GM12878 (cell line): ENCODE measurements at regions of chr1 and their contacts with region 1.

Region 1: GRCh38 chr1:224851210-224851847 is 78.1 kb upstream of the DNAH14 start:
- DNase-seq: peak; percentile 41
- ATAC-seq: peak; percentile 95
- H3K4me3 ChIP-seq: no peak overlapping the region
- H3K27ac ChIP-seq: no peak overlapping the region
- H3K4me1 ChIP-seq: no peaks in the 10 kb centered on the region
- H3K27me3 ChIP-seq: no peaks in the 10 kb centered on the region; a peak in 1 of 4 replicates
- CTCF ChIP-seq: peak; percentile 81 to 89 (median 87)
- EP300 ChIP-seq: no peak
- POLR2A ChIP-seq: no peak
- RAD21 ChIP-seq: peak; percentile 80

Region 2: DNA sequence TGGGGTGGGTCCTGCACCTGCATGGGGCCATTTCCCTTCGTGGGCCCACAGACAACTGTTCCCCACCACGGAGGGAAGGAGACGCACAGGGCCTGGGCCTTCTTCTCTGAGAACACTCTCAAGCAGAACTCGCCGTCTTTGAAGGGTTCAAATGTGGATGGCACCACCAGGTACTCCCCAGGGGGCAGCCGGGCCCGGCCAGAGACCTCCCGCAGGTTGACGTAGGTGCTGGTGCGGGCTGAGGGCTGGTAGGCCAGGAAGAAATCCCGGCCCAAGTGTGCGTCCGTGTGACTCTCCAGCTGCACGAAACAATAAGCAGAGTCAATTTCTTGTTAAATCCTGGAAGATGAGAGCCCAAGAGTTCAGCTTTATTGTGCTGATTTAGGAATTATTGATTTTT is 1242.3 kb before region 1 on chr1:
- CTCF ChIA-PET with region 1: no interaction called
- POLR2A ChIA-PET with region 1: no interaction called
- RAD21 ChIA-PET with region 1: no interaction called
- SMC1A ChIA-PET with region 1: no interaction called
- in situ Hi-C with region 1: no loop called
- intact Hi-C with region 1: no loop called
- DNase-seq: no peak
- ATAC-seq: no peak
- H3K4me3 ChIP-seq: no peak overlapping the region
- H3K27ac ChIP-seq: no peak overlapping the region
- H3K4me1 ChIP-seq: no peaks in the 10 kb centered on the region
- H3K27me3 ChIP-seq: peaks cover 0 to 3% of the 10 kb centered on the region in 2 experiments; a peak in 1 of 4 replicates
- CTCF ChIP-seq: no peak
- EP300 ChIP-seq: no peak
- POLR2A ChIP-seq: no peak
- RAD21 ChIP-seq: no peak

Region 3: GRCh38 chr1:224513787-224514209 is 337.5 kb before region 1 on chr1:
- CTCF ChIA-PET with region 1: interaction called, 191 read pairs
- POLR2A ChIA-PET with region 1: interaction called, 3 read pairs
- RAD21 ChIA-PET with region 1: interaction called, 35 read pairs
- SMC1A ChIA-PET with region 1: interaction called, 89 read pairs
- in situ Hi-C with region 1: loop called (anchors 5 kb)
- intact Hi-C with region 1: loop called (anchors 1 kb)
- DNase-seq: no peak
- ATAC-seq: peak; percentile 100
- H3K4me3 ChIP-seq: no peak overlapping the region
- H3K27ac ChIP-seq: no peak overlapping the region
- H3K4me1 ChIP-seq: 0 out of 2 replicates have a peak, but pooled peaks cover 5% of the 10 kb centered on the region
- H3K27me3 ChIP-seq: no peaks in the 10 kb centered on the region
- CTCF ChIP-seq: peak; percentile 86 to 98 (median 92); a peak in 5 of 6 replicates
- EP300 ChIP-seq: no peak
- POLR2A ChIP-seq: no peak
- RAD21 ChIP-seq: peak; percentile 92

Region 4: DNA sequence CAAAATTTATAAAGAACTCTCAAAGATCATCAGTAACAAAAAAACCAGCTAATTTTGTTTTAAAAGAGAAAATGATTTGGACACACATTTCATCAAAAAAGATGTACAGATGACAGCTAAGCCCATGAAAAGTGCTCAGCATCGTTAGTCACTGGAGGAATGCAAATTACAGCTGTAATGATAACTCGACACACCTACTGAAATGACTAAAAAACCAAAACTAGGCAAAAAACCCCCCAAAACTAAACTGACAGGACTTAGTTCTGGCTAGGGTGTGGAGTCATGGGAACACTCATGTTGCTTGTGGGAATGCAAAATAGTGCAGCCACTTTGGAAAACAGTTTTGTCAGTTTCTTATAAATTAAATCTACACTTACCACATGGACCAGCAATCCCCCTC is 175.7 kb before region 1 on chr1:
- CTCF ChIA-PET with region 1: interaction called, 85 read pairs
- POLR2A ChIA-PET with region 1: no interaction called
- RAD21 ChIA-PET with region 1: interaction called, 16 read pairs
- SMC1A ChIA-PET with region 1: interaction called, 37 read pairs
- in situ Hi-C with region 1: no loop called
- intact Hi-C with region 1: no loop called
- DNase-seq: no peak
- ATAC-seq: peak; percentile 73
- H3K4me3 ChIP-seq: no peak overlapping the region
- H3K27ac ChIP-seq: no peak overlapping the region
- H3K4me1 ChIP-seq: peaks cover 3% of the 10 kb centered on the region; the same call in 1 of the 2 replicates
- H3K27me3 ChIP-seq: no peaks in the 10 kb centered on the region; a peak in 1 of 4 replicates
- CTCF ChIP-seq: no peak
- EP300 ChIP-seq: no peak; a peak in 1 of 4 replicates
- POLR2A ChIP-seq: no peak
- RAD21 ChIP-seq: no peak

Region 5: DNA sequence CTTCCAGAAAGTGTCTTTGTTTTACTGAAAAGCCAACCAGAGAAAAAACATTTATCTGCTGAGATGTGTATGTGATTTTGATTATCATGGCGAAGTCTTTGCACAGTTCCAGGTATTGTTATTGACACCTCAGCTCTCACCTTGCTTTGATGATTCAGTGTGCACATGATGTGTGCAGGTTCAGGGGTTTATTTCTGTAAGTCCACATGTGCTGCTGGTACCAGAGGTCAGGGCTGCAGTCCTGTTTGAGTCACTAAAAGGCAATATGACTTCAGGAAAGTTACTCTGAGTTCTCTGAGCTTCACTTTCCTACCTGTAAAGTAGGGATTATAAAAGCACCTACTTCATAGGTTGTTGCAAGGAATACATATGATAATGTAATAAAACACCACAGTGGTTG is 138.1 kb before region 1 on chr1:
- CTCF ChIA-PET with region 1: interaction called, 13 read pairs
- POLR2A ChIA-PET with region 1: no interaction called
- RAD21 ChIA-PET with region 1: no interaction called
- SMC1A ChIA-PET with region 1: interaction called, 5 read pairs
- in situ Hi-C with region 1: loop called (anchors 5 kb)
- intact Hi-C with region 1: no loop called
- DNase-seq: no peak
- ATAC-seq: no peak
- H3K4me3 ChIP-seq: no peak overlapping the region
- H3K27ac ChIP-seq: no peak overlapping the region
- H3K4me1 ChIP-seq: no peaks in the 10 kb centered on the region
- H3K27me3 ChIP-seq: no peaks in the 10 kb centered on the region
- CTCF ChIP-seq: no peak
- EP300 ChIP-seq: no peak
- POLR2A ChIP-seq: no peak
- RAD21 ChIP-seq: no peak

Region 6: GRCh38 chr1:224774378-224774777 is 77.0 kb before region 1 on chr1:
- CTCF ChIA-PET with region 1: interaction called, 16 read pairs
- POLR2A ChIA-PET with region 1: interaction called, 3 read pairs
- RAD21 ChIA-PET with region 1: interaction called, 4 read pairs
- SMC1A ChIA-PET with region 1: interaction called, 16 read pairs
- in situ Hi-C with region 1: no loop called
- intact Hi-C with region 1: no loop called
- DNase-seq: no peak
- ATAC-seq: peak; percentile 91
- H3K4me3 ChIP-seq: no peak overlapping the region
- H3K27ac ChIP-seq: no peak overlapping the region
- H3K4me1 ChIP-seq: no peaks in the 10 kb centered on the region
- H3K27me3 ChIP-seq: no peaks in the 10 kb centered on the region
- CTCF ChIP-seq: peak in 2 of 3 experiments; percentile 42 to 59; a peak in 4 of 6 replicates
- EP300 ChIP-seq: no peak
- POLR2A ChIP-seq: no peak
- RAD21 ChIP-seq: peak; percentile 52

Region 7: DNA sequence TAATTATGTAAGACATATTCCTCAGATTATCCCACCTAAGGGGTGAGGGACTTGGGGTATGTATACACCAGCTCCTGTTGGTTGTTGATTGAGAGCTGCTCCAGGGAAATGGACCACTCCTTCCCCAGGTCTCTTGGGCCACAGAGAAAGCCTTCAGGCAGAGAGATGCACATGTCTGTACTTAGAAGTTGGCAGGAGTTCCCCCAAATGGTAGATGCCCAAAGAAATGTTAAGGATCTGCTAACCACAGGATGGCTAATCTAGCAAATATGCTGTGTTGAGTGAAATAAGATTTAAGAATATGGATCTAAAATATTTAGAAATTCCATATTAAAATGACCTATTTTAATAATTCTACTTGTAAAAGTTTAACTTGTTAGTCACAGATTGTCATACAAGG is 22.6 kb before region 1 on chr1:
- CTCF ChIA-PET with region 1: interaction called, 13 read pairs
- POLR2A ChIA-PET with region 1: no interaction called
- RAD21 ChIA-PET with region 1: interaction called, 7 read pairs
- SMC1A ChIA-PET with region 1: interaction called, 3 read pairs
- in situ Hi-C with region 1: no loop called
- intact Hi-C with region 1: no loop called
- DNase-seq: no peak
- ATAC-seq: no peak
- H3K4me3 ChIP-seq: no peak overlapping the region
- H3K27ac ChIP-seq: no peak overlapping the region
- H3K4me1 ChIP-seq: no peaks in the 10 kb centered on the region
- H3K27me3 ChIP-seq: no peaks in the 10 kb centered on the region
- CTCF ChIP-seq: no peak
- EP300 ChIP-seq: no peak
- POLR2A ChIP-seq: no peak
- RAD21 ChIP-seq: no peak

Region 8: GRCh38 chr1:224922404-224923164 is 71.3 kb after region 1 on chr1:
- CTCF ChIA-PET with region 1: interaction called, 72 read pairs
- POLR2A ChIA-PET with region 1: no interaction called
- RAD21 ChIA-PET with region 1: interaction called, 90 read pairs
- SMC1A ChIA-PET with region 1: interaction called, 41 read pairs
- in situ Hi-C with region 1: no loop called
- intact Hi-C with region 1: loop called (anchors 2 kb)
- DNase-seq: peak; percentile 11
- ATAC-seq: peak; percentile 84
- H3K4me3 ChIP-seq: no peak overlapping the region
- H3K27ac ChIP-seq: no peak overlapping the region
- H3K4me1 ChIP-seq: no peaks in the 10 kb centered on the region
- H3K27me3 ChIP-seq: no peaks in the 10 kb centered on the region
- CTCF ChIP-seq: peak; percentile 54 to 78 (median 61); a peak in 5 of 6 replicates
- EP300 ChIP-seq: no peak
- POLR2A ChIP-seq: no peak
- RAD21 ChIP-seq: peak; percentile 78

Region 9: DNA sequence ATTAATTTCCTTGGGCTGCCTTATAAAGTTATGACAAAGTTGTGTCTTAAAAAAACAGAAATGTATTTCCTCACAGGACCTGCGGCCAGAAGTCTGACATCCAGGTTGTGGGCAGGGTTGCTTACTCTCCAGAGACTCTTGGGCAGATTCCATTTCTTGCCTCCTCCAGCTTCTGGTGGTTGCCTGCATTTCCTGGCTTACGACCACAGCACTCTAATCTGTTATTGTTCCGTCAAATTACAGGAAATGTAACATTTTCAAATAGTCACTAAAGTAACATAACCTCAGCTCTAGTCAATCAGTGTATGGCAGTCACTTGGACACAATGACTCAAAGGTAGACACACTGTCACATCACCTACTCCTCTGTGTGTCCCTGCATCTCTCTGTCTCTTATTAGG is 304.9 kb after region 1 on chr1:
- CTCF ChIA-PET with region 1: no interaction called
- POLR2A ChIA-PET with region 1: no interaction called
- RAD21 ChIA-PET with region 1: no interaction called
- SMC1A ChIA-PET with region 1: no interaction called
- in situ Hi-C with region 1: no loop called
- intact Hi-C with region 1: no loop called
- DNase-seq: no peak
- ATAC-seq: peak; percentile 27; the same call in 2 of the 3 replicates
- H3K4me3 ChIP-seq: no peak overlapping the region
- H3K27ac ChIP-seq: no peak overlapping the region
- H3K4me1 ChIP-seq: no peaks in the 10 kb centered on the region
- H3K27me3 ChIP-seq: no peaks in the 10 kb centered on the region
- CTCF ChIP-seq: no peak
- EP300 ChIP-seq: no peak
- POLR2A ChIP-seq: no peak
- RAD21 ChIP-seq: no peak

Region 10: GRCh38 chr1:225277445-225277844 is 426.1 kb after region 1 on chr1:
- CTCF ChIA-PET with region 1: no interaction called
- POLR2A ChIA-PET with region 1: no interaction called
- RAD21 ChIA-PET with region 1: no interaction called
- SMC1A ChIA-PET with region 1: no interaction called
- in situ Hi-C with region 1: no loop called
- intact Hi-C with region 1: no loop called
- DNase-seq: no peak
- ATAC-seq: no peak
- H3K4me3 ChIP-seq: no peak overlapping the region
- H3K27ac ChIP-seq: no peak overlapping the region
- H3K4me1 ChIP-seq: no peaks in the 10 kb centered on the region
- H3K27me3 ChIP-seq: no peaks in the 10 kb centered on the region
- CTCF ChIP-seq: no peak
- EP300 ChIP-seq: no peak
- POLR2A ChIP-seq: no peak
- RAD21 ChIP-seq: no peak